BJ (cell line): ENCODE measurements at regions of chr20 and their contacts with region 1.

Region 1: DNA sequence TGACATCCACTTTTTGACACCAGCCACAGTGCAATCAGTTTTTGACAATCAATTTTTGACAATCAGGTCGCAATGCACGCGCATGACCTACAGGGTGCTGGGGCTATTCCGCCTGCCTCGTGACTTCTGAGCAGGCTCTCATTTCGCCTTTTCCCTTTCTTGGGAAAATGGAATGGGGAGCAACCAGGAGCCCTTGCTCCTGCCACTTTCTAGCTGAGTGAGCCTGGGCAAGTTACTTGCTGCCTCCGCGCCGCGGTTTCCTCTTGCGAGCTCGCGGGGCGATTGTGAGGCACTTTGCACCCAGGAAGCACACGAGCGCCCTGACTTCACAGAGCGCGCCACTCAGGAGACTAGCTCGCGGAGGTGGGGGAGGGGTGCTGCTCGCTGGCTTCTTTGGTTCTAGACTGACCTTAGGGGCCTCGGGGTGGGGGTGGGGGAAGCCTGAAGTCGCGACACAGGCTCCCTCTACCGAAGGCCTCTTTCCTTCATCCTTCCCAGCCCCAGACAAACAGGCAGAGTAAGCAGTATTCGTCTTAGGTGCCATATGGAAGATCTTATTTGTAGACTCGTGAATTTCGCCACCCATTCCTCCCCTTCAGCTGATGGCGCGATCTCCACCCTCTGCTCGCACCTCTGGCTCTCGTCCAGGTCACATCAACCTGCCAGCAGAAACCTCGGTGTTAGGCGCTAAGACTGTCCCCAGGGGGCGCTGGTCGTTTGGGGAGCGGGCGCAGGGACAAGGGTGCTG is 4.6 kb downstream of the TP53TG5 start:
- DNase-seq: no peak
- H3K4me3 ChIP-seq: peak overlapping the region; percentile 33
- H3K27me3 ChIP-seq: no peaks in the 10 kb centered on the region
- CTCF ChIP-seq: peak; percentile 94

Region 2: GRCh38 chr20:45387274-45387673 is 13.7 kb after region 1 on chr20:
- CTCF ChIA-PET with region 1: interaction called, 16 read pairs
- POLR2A ChIA-PET with region 1: no interaction called
- DNase-seq: no peak
- H3K4me3 ChIP-seq: no peak overlapping the region
- H3K27me3 ChIP-seq: no peaks in the 10 kb centered on the region
- CTCF ChIP-seq: no peak

Region 3: DNA sequence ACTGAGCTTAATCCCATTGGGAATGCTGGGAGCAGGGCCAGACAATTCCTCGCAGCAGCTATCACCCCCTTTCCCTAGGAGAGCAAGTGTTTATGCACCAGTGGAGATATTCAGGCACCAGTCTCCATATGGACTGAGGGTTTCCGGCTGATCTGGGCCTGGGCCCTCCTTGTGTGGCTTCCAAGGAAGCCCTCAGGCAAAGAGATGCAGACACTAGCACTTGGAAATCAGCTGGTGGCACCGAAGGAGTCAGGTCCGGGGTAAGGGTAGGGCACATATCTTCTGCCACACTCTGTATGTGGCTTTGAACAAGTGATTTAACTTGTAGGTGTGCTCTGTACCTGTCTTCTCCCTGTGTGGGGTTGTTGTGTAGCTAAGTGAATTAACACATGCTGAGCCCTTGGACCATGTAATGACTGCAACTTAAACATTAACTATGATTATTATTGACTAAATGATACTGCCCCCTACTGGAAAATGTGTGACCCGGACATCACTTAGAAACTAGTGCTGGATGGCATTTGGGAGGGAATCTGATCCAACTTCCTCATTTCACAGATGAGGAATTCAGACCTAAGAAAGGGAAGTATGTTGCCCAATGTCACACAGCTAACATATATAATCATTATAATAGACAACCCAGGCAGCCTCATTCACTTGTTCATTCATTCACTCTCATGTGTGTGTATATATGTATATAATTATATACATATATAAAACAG is 76.7 kb after region 1 on chr20:
- CTCF ChIA-PET with region 1: interaction called, 13 read pairs
- POLR2A ChIA-PET with region 1: no interaction called
- DNase-seq: no peak
- H3K4me3 ChIP-seq: no peak overlapping the region
- H3K27me3 ChIP-seq: peaks cover 8% of the 10 kb centered on the region
- CTCF ChIP-seq: peak; percentile 55

Region 4: DNA sequence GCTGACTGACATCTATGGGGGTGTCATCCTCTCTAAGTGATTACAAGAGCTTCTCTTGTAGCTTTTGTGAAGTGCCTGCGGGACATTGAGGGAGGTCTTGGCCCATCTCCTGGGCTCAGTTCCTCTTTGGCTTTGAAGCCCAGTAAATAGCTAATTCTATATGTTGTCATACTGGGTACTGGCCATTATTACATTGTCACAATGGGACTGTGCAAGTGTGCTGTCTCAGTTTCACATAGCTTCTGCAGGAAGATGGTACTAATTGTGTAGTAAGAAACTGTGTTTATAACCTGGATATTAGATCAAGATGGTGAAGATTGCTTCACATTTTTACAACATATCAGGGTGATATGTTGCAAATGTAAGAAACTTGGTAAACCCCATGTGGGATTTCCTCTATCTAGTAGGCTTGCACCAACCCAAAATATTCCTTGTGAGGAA is 122.0 kb after region 1 on chr20:
- CTCF ChIA-PET with region 1: no interaction called
- POLR2A ChIA-PET with region 1: no interaction called
- DNase-seq: no peak
- H3K4me3 ChIP-seq: no peak overlapping the region
- H3K27me3 ChIP-seq: no peaks in the 10 kb centered on the region; the same call in 1 of the 2 replicates
- CTCF ChIP-seq: no peak